Endothelial cell of umbilical vein (primary cell): ENCODE measurements at regions of chr20 and their contacts with region 1.

Region 1: DNA sequence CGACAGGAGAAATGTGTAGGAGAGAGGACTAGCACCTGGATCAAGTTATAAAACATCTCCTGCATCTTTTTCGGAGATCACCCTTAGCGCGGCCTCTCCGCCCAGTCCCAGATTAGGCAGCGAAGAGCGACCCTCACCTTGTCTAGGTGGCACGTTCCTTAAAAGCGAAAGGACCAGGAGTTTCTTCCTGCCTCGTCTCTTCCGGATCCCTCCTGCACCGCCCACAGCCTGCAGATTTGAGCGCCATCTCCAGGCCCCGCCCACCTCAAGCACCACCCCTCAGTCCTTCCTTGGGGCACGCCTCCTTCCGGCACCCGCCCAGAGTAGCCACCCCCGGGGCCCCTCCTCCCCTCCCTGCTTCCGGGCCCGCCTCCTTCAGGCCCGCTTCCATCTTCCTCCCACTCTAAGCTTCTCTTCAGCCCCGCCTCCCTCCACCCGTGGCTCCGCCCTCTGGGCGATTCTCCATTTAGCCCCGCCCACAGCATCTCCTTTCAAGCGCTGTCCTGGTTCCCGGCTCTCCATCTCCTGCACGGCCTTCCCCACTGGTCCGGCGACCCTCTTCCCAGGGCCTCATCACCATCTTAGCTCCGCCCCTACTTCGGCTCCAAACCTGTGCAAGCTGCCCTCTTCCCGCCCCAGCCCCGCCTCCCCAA is 662 bp upstream of the RALY start:
- DNase-seq: peak; percentile 100
- H3K4me3 ChIP-seq: peak overlapping the region; percentile 92 to 99 (median 96)
- H3K27ac ChIP-seq: peak overlapping the region; percentile 86
- H3K4me1 ChIP-seq: peaks cover 19% of the 10 kb centered on the region
- H3K27me3 ChIP-seq: no peaks in the 10 kb centered on the region
- CTCF ChIP-seq: no peak
- POLR2A ChIP-seq: peak; percentile 96

Region 2: DNA sequence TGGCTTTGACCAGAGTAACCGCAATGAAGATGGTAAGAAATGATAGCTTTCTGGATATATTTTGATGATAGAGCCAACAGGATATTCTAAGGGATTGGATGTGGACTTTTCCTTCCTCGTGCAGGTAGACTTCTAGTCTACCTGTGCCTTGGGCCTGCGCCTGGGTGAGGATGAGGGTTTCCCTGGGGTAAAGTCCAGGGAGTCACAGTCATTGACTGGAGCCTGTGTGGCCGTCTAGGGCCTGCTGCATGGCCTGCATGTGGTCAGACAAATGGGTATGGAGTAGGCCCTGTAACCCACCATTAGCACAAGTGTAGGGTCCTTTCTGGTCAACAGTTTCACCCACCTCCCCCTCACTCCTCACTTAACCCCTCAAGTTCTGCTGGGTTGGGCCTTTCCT is 194.6 kb before region 1 on chr20:
- CTCF ChIA-PET with region 1: no interaction called
- POLR2A ChIA-PET with region 1: no interaction called
- dilution Hi-C with region 1: no loop called
- intact Hi-C with region 1: no loop called
- DNase-seq: no peak
- H3K4me3 ChIP-seq: no peak overlapping the region
- H3K27ac ChIP-seq: no peak overlapping the region
- H3K4me1 ChIP-seq: peaks cover 3% of the 10 kb centered on the region
- H3K27me3 ChIP-seq: no peaks in the 10 kb centered on the region
- CTCF ChIP-seq: no peak
- POLR2A ChIP-seq: no peak

Region 3: DNA sequence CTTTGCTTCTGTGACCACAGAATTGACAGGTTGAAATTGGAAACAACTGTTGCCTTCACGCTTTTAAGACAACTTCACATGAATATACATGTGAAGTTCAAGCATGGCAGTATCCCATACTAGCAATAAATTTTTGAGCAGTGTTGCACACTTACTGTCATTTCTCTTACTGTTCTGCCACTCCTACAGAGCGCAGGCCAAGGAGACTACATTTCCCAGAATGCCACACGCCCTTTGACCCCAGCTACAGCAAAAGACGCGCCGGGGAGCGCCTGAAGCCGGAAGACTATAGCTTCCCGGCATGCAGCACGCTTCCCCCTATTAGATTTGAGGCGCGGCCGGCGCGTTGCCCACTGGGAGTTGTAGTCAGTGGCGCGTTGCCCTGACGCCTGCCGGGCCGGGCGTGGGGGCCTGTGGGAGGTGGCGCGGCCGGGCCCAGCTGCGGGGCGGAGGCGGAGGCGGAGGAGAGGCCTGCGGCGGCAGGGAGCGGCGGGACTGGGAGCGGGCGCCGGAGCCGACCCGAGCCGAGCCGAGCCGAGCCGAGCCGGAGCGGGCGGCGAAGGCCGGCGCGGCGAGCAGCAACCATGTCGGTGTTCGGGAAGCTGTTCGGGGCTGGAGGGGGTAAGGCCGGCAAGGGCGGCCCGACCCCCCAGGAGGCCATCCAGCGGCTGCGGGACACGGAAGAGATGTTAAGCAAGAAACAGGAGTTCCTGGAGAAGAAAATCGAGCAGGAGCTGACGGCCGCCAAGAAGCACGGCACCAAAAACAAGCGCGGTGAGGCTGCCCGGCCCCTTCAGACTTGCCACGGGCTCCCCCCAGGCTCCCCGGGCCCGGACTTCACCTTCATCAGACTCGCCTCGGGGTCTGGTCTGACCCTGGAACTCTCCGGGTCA is 181.9 kb before region 1 on chr20 and contains the start of gene CHMP4B:
- CTCF ChIA-PET with region 1: no interaction called
- POLR2A ChIA-PET with region 1: interaction called, 3 read pairs
- dilution Hi-C with region 1: no loop called
- intact Hi-C with region 1: loop called (anchors 1 kb)
- DNase-seq: peak; percentile 98
- H3K4me3 ChIP-seq: peak within 1 kb of the TSS; percentile 60 to 86 (median 83)
- H3K27ac ChIP-seq: peak within 1 kb of the TSS; percentile 96
- H3K4me1 ChIP-seq: peaks cover 23% of the 10 kb centered on the region
- H3K27me3 ChIP-seq: no peaks in the 10 kb centered on the region
- CTCF ChIP-seq: no peak
- POLR2A ChIP-seq: peak; percentile 69
- total RNA-seq, gene CHMP4B: 105 and 112 TPM in 2 replicates

Region 4: DNA sequence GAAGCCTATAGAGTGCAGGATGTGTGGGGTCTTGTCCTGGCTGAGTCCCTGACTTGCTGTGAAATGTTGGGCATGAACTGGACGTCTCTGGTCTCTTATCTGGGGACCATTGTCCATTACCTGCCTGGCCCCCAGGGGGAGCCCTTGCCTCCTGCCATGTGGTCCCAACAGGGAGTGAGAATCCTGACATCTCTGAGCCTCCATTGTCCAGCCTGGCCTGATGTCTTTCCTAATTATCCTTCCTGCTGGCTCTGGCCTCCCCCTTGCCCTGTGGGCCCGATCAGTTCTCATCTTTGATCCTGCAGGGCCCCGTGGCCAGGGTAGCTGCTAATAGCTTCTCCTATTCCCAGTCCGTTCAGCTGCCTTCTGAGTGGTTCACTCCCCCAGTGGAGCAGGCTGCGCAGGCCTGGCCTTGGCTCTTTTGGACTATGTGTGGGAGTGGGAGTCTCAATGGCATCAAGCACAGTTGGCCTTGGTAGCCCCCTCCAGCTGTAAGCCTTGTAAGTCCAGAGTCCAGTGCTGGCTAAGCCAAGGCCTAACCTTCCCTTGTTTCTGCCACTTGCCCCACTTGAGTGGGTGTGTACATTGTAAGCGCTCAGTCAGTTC is 77.2 kb before region 1 on chr20:
- CTCF ChIA-PET with region 1: interaction called, 11 read pairs
- POLR2A ChIA-PET with region 1: interaction called, 9 read pairs
- dilution Hi-C with region 1: no loop called
- intact Hi-C with region 1: loop called (anchors 1 kb)
- DNase-seq: no peak
- H3K4me3 ChIP-seq: no peak overlapping the region
- H3K27ac ChIP-seq: no peak overlapping the region
- H3K4me1 ChIP-seq: peaks cover 16% of the 10 kb centered on the region
- H3K27me3 ChIP-seq: peaks cover 0 to 2% of the 10 kb centered on the region in 2 experiments
- CTCF ChIP-seq: peak; percentile 47 to 55
- POLR2A ChIP-seq: no peak

Region 5: GRCh38 chr20:34069341-34070078 is 76.5 kb after region 1 on chr20:
- CTCF ChIA-PET with region 1: interaction called, 3 read pairs
- POLR2A ChIA-PET with region 1: interaction called, 3 read pairs
- dilution Hi-C with region 1: no loop called
- intact Hi-C with region 1: loop called (anchors 2 kb)
- DNase-seq: peak; percentile 90
- H3K4me3 ChIP-seq: no peak overlapping the region
- H3K27ac ChIP-seq: no peak overlapping the region
- H3K4me1 ChIP-seq: no peaks in the 10 kb centered on the region
- H3K27me3 ChIP-seq: no peaks in the 10 kb centered on the region
- CTCF ChIP-seq: peak; percentile 64 to 93
- POLR2A ChIP-seq: no peak

Region 6: DNA sequence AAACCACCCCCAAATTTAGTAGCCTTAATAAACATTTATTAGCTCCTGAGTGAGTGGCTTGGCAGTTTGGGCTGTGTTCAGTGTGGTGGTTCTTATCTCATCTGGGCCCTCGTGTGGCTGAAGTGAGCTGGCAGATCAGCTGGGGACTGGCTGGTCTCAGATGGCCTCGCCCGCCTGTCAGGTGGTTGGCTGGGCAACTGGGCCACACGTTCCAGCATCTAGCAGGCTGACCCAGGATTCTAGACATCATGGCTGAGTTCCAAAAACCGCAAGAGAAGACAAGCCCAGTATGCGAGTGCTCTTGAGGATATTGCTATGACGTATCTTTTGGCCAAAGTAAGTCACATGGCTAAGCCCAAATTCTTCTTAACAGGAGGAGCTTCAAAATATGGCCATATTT is 90.1 kb after region 1 on chr20:
- CTCF ChIA-PET with region 1: no interaction called
- POLR2A ChIA-PET with region 1: no interaction called
- dilution Hi-C with region 1: no loop called
- intact Hi-C with region 1: no loop called
- DNase-seq: peak; percentile 32
- H3K4me3 ChIP-seq: no peak overlapping the region
- H3K27ac ChIP-seq: no peak overlapping the region
- H3K4me1 ChIP-seq: no peaks in the 10 kb centered on the region
- H3K27me3 ChIP-seq: no peaks in the 10 kb centered on the region
- CTCF ChIP-seq: no peak
- POLR2A ChIP-seq: no peak

Region 7: DNA sequence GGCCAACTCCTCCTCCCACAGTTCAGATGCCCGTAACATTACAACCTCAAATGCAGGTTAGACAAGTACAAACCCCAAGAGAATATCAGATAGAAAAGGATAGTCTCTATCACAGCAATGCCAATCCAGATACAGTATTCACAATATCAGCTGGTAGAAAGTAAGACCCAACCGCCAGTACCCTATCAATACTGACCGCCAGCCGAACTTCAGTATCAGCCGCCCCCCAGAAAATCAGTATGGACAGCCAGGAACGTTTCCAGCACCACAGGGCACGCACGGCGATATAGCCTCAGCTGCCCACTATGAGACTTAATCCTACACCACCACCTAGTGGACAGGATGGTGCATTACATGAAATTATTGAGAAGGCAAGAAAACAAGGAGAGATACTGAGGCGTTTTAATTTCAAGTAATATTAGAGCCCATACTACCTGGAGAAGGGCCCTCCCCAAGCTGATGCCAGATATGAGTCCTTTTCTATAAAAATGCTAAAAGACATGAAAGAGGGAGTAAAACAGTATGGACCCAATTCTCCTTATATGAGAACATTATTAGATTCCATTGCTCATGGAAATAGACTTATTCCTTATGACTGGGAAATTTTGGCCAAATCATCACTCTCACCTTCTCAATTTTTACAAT is 136.6 kb after region 1 on chr20:
- CTCF ChIA-PET with region 1: no interaction called
- POLR2A ChIA-PET with region 1: no interaction called
- dilution Hi-C with region 1: no loop called
- intact Hi-C with region 1: loop called (anchors 1 kb)
- DNase-seq: peak; percentile 78
- H3K4me3 ChIP-seq: no peak overlapping the region
- H3K27ac ChIP-seq: no peak overlapping the region
- H3K4me1 ChIP-seq: peaks cover 3% of the 10 kb centered on the region
- H3K27me3 ChIP-seq: no peaks in the 10 kb centered on the region
- CTCF ChIP-seq: peak; percentile 61 to 76
- POLR2A ChIP-seq: no peak

Region 8: GRCh38 chr20:34171640-34172039 is 178.6 kb after region 1 on chr20:
- CTCF ChIA-PET with region 1: no interaction called
- POLR2A ChIA-PET with region 1: no interaction called
- dilution Hi-C with region 1: no loop called
- intact Hi-C with region 1: no loop called
- DNase-seq: no peak
- H3K4me3 ChIP-seq: no peak overlapping the region
- H3K27ac ChIP-seq: no peak overlapping the region
- H3K4me1 ChIP-seq: no peaks in the 10 kb centered on the region
- H3K27me3 ChIP-seq: peaks cover 4 to 28% of the 10 kb centered on the region in 2 experiments
- CTCF ChIP-seq: no peak
- POLR2A ChIP-seq: no peak